Gastrocnemius medialis (tissue), 4 donors: ENCODE measurements at regions of chr18 and their contacts with region 1.

Region 1: GRCh38 chr18:75253784-75254183 is 43.2 kb downstream of the TSHZ1 start:
- DNase-seq: no peak
- ATAC-seq: peak in 1 of 2 donors; percentile 59
- H3K4me3 ChIP-seq: no peak overlapping the region
- H3K27ac ChIP-seq: peak overlapping the region in 2 of 4 donors; percentile 3 to 9
- H3K4me1 ChIP-seq: peaks cover 30 to 38% of the 10 kb centered on the region in 2 donors
- H3K27me3 ChIP-seq: no peaks in the 10 kb centered on the region
- CTCF ChIP-seq: no peak
- POLR2A ChIP-seq: no peak

Region 2: GRCh38 chr18:75223687-75224347 is 30.0 kb before region 1 on chr18:
- in situ Hi-C with region 1: no loop called
- intact Hi-C with region 1: loop called (anchors 1 kb)
- DNase-seq: no peak
- ATAC-seq: no peak
- H3K4me3 ChIP-seq: no peak overlapping the region
- H3K27ac ChIP-seq: no peak overlapping the region
- H3K4me1 ChIP-seq: peaks cover 62 to 67% of the 10 kb centered on the region in 2 donors
- H3K27me3 ChIP-seq: no peaks in the 10 kb centered on the region
- CTCF ChIP-seq: no peak
- POLR2A ChIP-seq: no peak